Stomach (tissue), 19 donors: ENCODE measurements at regions of chr12 and their contacts with region 1.

Region 1: GRCh38 chr12:4276524-4277204 is 3.1 kb downstream of the CCND2 start:
- DNase-seq: peak; percentile 77 to 98
- H3K4me3 ChIP-seq: peak overlapping the region in 3 of 4 donors; percentile 60 to 72 (median 61)
- H3K27ac ChIP-seq: peak overlapping the region in 4 of 5 donors; percentile 88 to 93 (median 90)
- H3K4me1 ChIP-seq: peaks cover 26 to 98% (median 70%) of the 10 kb centered on the region in 4 donors
- H3K27me3 ChIP-seq: peaks cover 0 to 51% (median 37%) of the 10 kb centered on the region in 3 donors
- CTCF ChIP-seq: peak in 5 of 7 experiments; percentile 76 to 90 (median 87)
- EP300 ChIP-seq: no peak
- POLR2A ChIP-seq: no peak

Region 2: DNA sequence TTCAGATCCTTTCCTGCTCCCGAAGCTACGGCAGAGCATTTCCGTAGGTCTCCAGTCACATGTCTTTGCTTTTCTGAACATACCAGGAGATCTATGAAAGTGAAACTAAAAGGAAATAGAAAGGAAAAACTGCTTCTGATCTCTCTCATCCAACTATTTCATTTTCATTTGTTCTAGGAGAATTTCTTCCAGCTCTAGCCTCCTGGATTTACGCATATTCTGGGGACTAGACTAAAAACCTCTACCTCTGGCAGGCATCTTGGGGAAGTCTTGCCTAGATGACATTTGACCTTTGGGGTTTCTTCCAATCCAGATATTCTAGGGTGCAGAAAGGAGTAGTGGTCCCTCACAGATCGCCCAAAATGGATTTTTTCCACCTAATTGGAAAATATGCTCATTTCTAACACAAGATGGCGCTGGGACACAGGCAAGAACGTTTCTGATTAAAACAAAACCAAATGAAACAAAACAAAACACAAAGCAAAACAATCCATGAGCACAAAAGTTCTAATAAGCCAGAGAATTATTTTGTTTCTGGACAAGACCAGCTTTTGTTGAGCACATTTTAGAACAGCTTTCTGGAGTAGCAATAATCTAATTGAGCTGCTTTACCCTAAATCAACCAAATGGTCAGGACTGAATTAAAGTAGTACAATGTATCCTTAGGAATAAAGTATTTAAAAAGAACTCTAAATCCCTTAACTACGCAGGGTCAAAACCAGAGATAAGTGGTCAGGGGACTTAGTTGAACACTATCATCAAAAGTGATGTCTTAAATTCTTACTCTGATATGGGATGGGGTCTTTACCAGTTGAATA is 391.2 kb before region 1 on chr12:
- intact Hi-C with region 1: loop called (anchors 10 kb)
- DNase-seq: peak in 1 of 2 donors; percentile 84
- H3K4me3 ChIP-seq: peak overlapping the region; percentile 19 to 32 (median 26)
- H3K27ac ChIP-seq: peak overlapping the region; percentile 26 to 77 (median 67)
- H3K4me1 ChIP-seq: peaks cover 0 to 7% (median 0%) of the 10 kb centered on the region in 4 donors
- H3K27me3 ChIP-seq: peaks cover 0 to 24% (median 0%) of the 10 kb centered on the region in 3 donors
- CTCF ChIP-seq: peak in 5 of 7 experiments; percentile 54 to 80 (median 68)
- EP300 ChIP-seq: no peak
- POLR2A ChIP-seq: no peak

Region 3: GRCh38 chr12:3998968-3999826 is 277.5 kb before region 1 on chr12:
- intact Hi-C with region 1: loop called (anchors 10 kb)
- DNase-seq: peak; percentile 64 to 95
- H3K4me3 ChIP-seq: no peak overlapping the region
- H3K27ac ChIP-seq: peak overlapping the region in 2 of 5 donors; percentile 34 to 50
- H3K4me1 ChIP-seq: peaks cover 0 to 9% (median 0%) of the 10 kb centered on the region in 4 donors
- H3K27me3 ChIP-seq: no peaks in the 10 kb centered on the region
- CTCF ChIP-seq: no peak
- EP300 ChIP-seq: no peak
- POLR2A ChIP-seq: no peak

Region 4: GRCh38 chr12:4107436-4107878 is 169.2 kb before region 1 on chr12:
- intact Hi-C with region 1: loop called (anchors 5 kb)
- DNase-seq: peak in 1 of 2 donors; percentile 84
- H3K4me3 ChIP-seq: no peak overlapping the region
- H3K27ac ChIP-seq: no peak overlapping the region
- H3K4me1 ChIP-seq: no peaks in the 10 kb centered on the region
- H3K27me3 ChIP-seq: peaks cover 0 to 20% (median 0%) of the 10 kb centered on the region in 3 donors
- CTCF ChIP-seq: peak in 3 of 7 experiments; percentile 17 to 51 (median 28)
- EP300 ChIP-seq: no peak
- POLR2A ChIP-seq: no peak